ENCODE measurements at regions of chr17 and their contacts with region 1.

Region 1: GRCh38 chr17:66715745-66716156 is 119.2 kb upstream of the CACNG5 start:
- DNase-seq: no peak
- ATAC-seq: peak; percentile 62 to 81
- H3K4me3 ChIP-seq: no peak overlapping the region
- H3K27ac ChIP-seq: no peak overlapping the region
- H3K4me1 ChIP-seq: peaks cover 0 to 7% of the 10 kb centered on the region in 2 donors
- H3K27me3 ChIP-seq: no peaks in the 10 kb centered on the region
- CTCF ChIP-seq: peak; percentile 65 to 73 (median 71)
- POLR2A ChIP-seq: no peak

Region 2: GRCh38 chr17:66841328-66841727 is 125.6 kb after region 1 on chr17:
- in situ Hi-C with region 1: no loop called
- intact Hi-C with region 1: no loop called
- DNase-seq: no peak
- ATAC-seq: no peak
- H3K4me3 ChIP-seq: no peak overlapping the region
- H3K27ac ChIP-seq: no peak overlapping the region
- H3K4me1 ChIP-seq: no peaks in the 10 kb centered on the region
- H3K27me3 ChIP-seq: peaks cover 0 to 8% (median under 1%) of the 10 kb centered on the region in 3 donors
- CTCF ChIP-seq: no peak
- POLR2A ChIP-seq: no peak

Region 3: GRCh38 chr17:66906321-66907278 is 190.8 kb after region 1 on chr17:
- in situ Hi-C with region 1: loop called (anchors 5 to 10 kb)
- intact Hi-C with region 1: loop called (anchors 1 kb)
- DNase-seq: peak; percentile 59 to 70
- ATAC-seq: peak; percentile 54 to 77
- H3K4me3 ChIP-seq: no peak overlapping the region
- H3K27ac ChIP-seq: no peak overlapping the region
- H3K4me1 ChIP-seq: no peaks in the 10 kb centered on the region
- H3K27me3 ChIP-seq: no peaks in the 10 kb centered on the region
- CTCF ChIP-seq: peak; percentile 79 to 87 (median 84)
- POLR2A ChIP-seq: no peak

Region 4: GRCh38 chr17:66975604-66976384 is 260.0 kb after region 1 on chr17:
- in situ Hi-C with region 1: no loop called
- intact Hi-C with region 1: loop called (anchors 5 kb)
- DNase-seq: peak; percentile 20 to 45
- ATAC-seq: peak; percentile 32 to 46
- H3K4me3 ChIP-seq: no peak overlapping the region
- H3K27ac ChIP-seq: peak overlapping the region in 1 of 4 donors; percentile 41
- H3K4me1 ChIP-seq: peaks cover 26 to 33% of the 10 kb centered on the region in 2 donors
- H3K27me3 ChIP-seq: no peaks in the 10 kb centered on the region
- CTCF ChIP-seq: peak in 2 of 5 experiments; percentile 11 to 22
- POLR2A ChIP-seq: no peak

Region 5: DNA sequence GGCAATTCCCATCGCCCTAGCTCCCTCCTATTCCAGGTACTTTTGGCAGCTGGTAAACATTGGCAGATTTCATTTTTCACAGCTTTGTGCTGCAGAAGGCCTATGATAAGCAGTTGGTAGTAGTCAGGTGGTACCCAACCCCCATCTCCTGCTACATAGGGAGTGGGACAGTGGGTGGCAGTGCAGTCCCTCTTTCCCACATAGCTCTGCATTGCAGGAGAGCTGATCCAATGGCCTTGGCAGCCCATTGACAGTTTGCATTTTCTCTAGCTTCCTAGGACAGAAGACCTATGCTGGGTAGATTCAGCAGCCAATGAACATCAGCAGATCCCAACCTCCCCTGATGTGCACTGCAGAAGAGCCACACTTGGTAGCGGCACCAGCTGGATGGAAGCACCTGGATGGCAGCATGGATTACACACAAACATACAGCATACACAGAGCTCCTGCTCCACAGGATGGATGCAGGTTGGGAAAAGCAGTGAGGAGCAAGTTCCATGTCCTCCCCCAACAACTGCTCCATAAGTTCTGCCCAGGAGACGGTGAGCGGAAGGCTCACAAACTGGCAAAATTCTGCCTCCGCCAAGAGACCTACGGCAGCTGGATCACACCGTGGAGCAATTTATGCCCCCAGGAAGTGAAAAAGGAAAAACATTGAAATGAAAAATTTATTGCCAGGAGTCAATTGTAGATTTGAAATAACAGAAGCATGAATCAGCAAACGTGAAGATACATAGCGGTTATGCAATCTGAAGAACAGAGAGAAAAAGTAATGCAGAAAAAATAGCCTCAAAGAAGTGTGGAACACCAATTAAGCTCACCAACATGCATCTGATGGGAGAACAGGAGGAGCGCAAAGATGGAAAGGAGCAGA is 424.3 kb after region 1 on chr17:
- in situ Hi-C with region 1: loop called in 1 of 4 experiments (anchors 25 kb)
- intact Hi-C with region 1: no loop called
- DNase-seq: no peak
- ATAC-seq: no peak
- H3K4me3 ChIP-seq: no peak overlapping the region
- H3K27ac ChIP-seq: no peak overlapping the region
- H3K4me1 ChIP-seq: no peaks in the 10 kb centered on the region
- H3K27me3 ChIP-seq: no peaks in the 10 kb centered on the region
- CTCF ChIP-seq: no peak
- POLR2A ChIP-seq: no peak

Region 6: GRCh38 chr17:67157732-67158639 is 442.2 kb after region 1 on chr17:
- in situ Hi-C with region 1: loop called in 1 of 4 experiments (anchors 25 kb)
- intact Hi-C with region 1: loop called (anchors 5 kb)
- DNase-seq: no peak
- ATAC-seq: peak in 1 of 2 donors; percentile 91
- H3K4me3 ChIP-seq: no peak overlapping the region
- H3K27ac ChIP-seq: no peak overlapping the region
- H3K4me1 ChIP-seq: peaks cover 8 to 10% of the 10 kb centered on the region in 2 donors
- H3K27me3 ChIP-seq: no peaks in the 10 kb centered on the region
- CTCF ChIP-seq: peak in 3 of 5 experiments; percentile 16 to 45 (median 31)
- POLR2A ChIP-seq: no peak

Region 7: GRCh38 chr17:67293251-67294203 is 577.8 kb after region 1 on chr17:
- in situ Hi-C with region 1: loop called in 1 of 4 experiments (anchors 25 kb)
- intact Hi-C with region 1: no loop called
- DNase-seq: peak; percentile 34 to 62
- ATAC-seq: peak; percentile 81
- H3K4me3 ChIP-seq: peak overlapping the region in 2 of 4 donors; percentile 6 to 43
- H3K27ac ChIP-seq: no peak overlapping the region
- H3K4me1 ChIP-seq: peaks cover 11 to 15% of the 10 kb centered on the region in 2 donors
- H3K27me3 ChIP-seq: no peaks in the 10 kb centered on the region
- CTCF ChIP-seq: peak; percentile 66 to 90 (median 80)
- POLR2A ChIP-seq: no peak

Region 8: DNA sequence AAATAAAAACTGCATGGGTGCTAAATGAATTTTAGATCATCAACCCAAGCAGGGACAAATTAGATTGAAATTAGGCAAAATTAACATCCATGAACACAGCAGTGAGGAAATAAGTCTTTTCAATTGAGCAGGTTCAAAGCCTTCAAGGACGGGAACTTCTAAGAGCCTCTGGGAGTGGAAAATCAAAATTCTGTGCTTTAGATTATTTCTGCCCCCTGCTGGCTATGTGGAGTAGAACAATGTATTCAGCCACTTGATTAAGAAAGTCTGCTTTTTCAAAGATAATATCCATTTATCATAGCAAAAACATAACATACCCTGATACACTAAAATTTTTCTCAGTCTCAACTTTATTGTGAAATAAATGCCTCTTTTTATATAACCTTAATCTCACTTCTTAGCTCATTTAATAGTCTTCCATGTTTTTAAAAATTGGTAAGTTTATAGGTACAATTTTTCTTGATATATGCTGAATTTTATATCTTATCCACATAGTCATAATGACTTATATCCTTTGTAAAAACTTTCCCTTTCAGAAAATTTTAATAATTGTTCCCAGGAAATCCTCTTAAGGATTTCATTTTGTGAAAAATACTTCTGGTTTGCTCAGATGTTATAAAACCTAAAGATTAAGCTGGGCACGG is 973.9 kb after region 1 on chr17:
- in situ Hi-C with region 1: no loop called
- intact Hi-C with region 1: loop called (anchors 5 kb)
- DNase-seq: peak in 1 of 2 donors; percentile 3
- ATAC-seq: peak; percentile 47 to 55
- H3K4me3 ChIP-seq: no peak overlapping the region
- H3K27ac ChIP-seq: no peak overlapping the region
- H3K4me1 ChIP-seq: no peaks in the 10 kb centered on the region
- H3K27me3 ChIP-seq: no peaks in the 10 kb centered on the region
- CTCF ChIP-seq: peak; percentile 65 to 80 (median 77)
- POLR2A ChIP-seq: no peak

Measured in gastrocnemius medialis (tissue), 4 donors.